Dorsolateral prefrontal cortex (tissue), 120 donors: ENCODE measurements at regions of chr7 and their contacts with region 1.

Region 1: DNA sequence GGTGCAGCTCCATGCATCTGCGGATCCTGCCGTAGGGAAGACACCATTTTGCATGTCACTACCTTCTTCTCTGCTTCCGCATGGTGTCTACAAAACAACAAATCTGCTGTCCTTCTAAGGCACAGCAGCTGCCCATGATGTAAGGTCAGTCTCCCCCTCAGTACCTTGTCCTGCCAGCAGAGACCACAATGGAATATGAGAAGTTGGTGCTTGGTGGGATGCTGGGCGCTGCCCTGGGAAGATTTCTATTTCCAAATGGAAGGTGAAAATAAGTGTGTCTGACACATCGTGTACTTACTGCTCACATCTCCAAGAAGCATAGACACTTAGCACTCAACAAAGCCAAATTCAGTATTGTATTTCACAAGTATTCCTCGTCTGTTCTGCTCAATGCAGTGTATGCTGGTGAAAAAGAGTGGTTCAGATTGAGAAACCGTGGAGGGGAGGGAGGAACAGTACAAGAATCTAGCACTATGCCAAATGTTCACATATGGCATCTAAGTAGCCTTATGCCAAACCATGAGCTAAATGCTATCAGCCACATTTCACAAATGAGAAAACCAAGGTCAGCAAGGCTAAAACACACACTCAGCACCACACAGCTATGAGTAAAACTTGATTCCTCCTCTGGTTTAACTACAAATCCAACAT is 95.0 kb downstream of the GRB10 start:
- DNase-seq: peak in 1 of 10 donors; percentile 40
- H3K4me3 ChIP-seq: no peak overlapping the region
- H3K27ac ChIP-seq: peak overlapping the region in 3 of 59 donors; percentile 12 to 57 (median 53)
- H3K27me3 ChIP-seq: no peaks in the 10 kb centered on the region
- CTCF ChIP-seq: no peak

Region 2: DNA sequence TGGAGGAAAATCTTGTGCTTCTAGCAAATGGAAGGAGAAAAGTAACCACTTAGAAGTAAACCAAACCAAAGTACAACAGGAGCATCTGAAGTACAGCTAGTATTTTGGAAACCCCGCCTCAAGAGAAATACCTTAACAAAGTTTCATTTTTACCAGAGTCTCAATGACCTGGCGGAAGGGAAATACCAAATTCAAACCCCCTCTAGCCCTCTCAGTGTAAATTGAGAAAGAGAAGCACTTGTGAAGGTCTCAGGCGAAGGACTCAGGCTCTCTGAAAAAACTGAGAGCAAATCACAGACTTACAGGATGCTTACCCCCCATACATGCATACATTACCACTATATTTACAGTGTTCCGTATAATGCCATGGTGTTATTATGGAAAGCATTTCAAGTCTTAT is 664.7 kb before region 1 on chr7:
- intact Hi-C with region 1: no loop called
- DNase-seq: no peak
- H3K4me3 ChIP-seq: no peak overlapping the region
- H3K27ac ChIP-seq: no peak overlapping the region
- H3K27me3 ChIP-seq: no peaks in the 10 kb centered on the region
- CTCF ChIP-seq: no peak

Region 3: DNA sequence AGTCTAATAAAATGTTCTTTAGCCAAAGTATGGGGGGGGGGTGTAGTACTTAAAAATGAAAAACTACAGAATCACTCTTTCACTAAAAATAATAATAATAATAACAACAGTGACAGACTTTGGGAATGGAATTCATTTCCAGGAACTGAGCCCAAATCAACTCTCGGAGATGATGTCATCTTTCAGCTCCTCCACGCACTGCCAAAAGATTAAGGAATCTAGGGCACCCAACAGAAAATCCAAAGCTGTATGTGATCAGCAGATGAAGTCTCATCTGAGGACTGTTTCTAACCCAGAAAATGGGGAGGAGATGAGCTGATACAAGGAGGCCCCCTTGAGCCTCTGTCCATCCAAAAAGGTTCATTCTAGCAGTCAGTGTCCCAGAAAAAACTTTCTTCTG is 40.5 kb after region 1 on chr7:
- intact Hi-C with region 1: no loop called
- DNase-seq: no peak
- H3K4me3 ChIP-seq: no peak overlapping the region
- H3K27ac ChIP-seq: no peak overlapping the region
- H3K27me3 ChIP-seq: no peaks in the 10 kb centered on the region
- CTCF ChIP-seq: no peak

Region 4: DNA sequence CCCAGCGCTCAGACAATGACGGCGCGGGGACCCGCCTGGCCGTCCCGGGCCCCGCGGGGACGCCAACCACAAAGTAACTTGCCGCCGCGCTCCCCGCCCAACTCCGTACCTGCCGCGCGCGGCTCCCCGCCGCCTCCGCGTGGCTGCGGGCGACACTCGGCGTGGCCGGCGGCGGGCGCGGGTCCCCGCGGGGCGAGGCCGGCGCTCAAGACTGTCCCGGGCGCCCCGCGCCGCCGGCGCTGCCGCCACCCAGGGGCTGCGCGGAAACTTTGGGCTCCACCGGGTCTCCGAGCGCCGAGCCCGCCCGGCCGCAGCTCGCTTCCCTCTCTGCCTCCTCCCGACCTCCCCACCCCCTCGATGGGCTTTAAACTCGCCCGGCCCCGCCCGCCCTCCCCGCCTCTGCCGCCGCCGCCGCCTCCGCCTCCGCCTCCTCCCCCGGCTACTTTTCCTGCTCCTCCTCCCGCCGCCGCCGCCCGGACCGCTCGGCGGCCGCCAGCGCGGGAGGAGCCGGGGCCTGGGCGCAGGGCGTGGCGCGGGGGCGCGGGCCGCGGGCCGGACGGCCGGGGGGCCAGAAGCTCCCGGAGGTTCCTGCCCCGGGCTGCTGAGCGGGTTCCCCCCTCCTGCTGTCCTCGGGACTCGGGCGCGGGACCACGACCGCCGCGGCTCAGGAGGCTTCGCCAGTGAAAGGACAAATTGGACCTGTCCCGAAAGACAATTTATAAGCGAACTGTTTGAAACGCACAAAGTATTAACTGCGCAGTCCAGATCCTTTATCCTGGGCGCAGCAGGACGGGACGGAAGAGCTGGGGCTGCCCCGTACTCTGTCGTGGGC is 105.6 kb after region 1 on chr7:
- intact Hi-C with region 1: loop called in 1 of 2 experiments (anchors 5 kb)
- DNase-seq: peak in 2 of 10 donors; percentile 28 to 46
- H3K4me3 ChIP-seq: peak overlapping the region in 58 of 59 donors; percentile 7 to 73 (median 52)
- H3K27ac ChIP-seq: peak overlapping the region in 21 of 59 donors; percentile 13 to 72 (median 42)
- H3K27me3 ChIP-seq: peaks cover 0 to 48% (median 20%) of the 10 kb centered on the region in 45 donors
- CTCF ChIP-seq: no peak

Region 5: DNA sequence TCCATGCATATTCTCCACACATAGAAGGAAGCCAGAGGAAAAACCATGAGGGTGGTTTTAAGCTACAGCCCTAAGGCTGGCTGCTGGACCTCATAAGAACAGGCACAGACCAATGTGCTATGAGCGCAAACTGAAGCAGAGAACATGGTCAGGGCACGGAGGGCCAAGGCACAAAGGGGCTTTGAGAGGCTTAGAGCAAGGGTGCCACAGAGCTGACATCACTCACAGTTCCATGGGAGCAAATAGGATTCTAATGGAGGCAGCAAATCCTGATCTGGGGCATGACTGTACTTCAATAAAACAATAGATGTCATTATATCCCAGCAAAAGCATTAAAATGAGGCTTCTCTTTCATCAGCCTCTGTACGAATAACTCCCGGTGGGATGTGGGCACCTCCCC is 466.5 kb after region 1 on chr7:
- intact Hi-C with region 1: loop called in 1 of 2 experiments (anchors 5 kb)
- DNase-seq: peak in 8 of 10 donors; percentile 56 to 87 (median 81)
- H3K4me3 ChIP-seq: peak overlapping the region in 8 of 59 donors; percentile 0 to 21 (median 10)
- H3K27ac ChIP-seq: peak overlapping the region; percentile 0 to 97 (median 90)
- H3K27me3 ChIP-seq: no peaks in the 10 kb centered on the region
- CTCF ChIP-seq: peak in 9 of 56 donors; percentile 7 to 31 (median 16)

Region 6: DNA sequence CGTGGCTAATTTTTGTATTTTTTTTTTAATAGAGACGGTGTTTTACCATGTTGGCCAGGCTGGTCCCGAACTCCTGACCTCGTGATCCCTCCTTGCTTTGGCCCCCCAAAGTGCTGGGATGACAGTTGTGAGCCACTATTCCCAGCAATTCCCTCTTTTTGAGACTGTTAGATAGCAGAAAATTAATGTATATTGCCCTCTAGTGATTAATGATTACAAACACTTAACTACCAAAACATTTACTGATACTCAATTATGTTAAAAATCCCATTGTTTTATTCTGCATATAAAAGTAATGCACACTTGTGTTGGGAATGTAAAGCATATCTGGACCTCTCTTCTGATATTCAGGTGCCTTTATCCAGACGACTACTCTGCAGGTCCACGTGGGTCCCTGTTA is 670.1 kb after region 1 on chr7:
- intact Hi-C with region 1: loop called in 1 of 2 experiments (anchors 5 kb)
- DNase-seq: no peak
- H3K4me3 ChIP-seq: no peak overlapping the region
- H3K27ac ChIP-seq: peak overlapping the region in 1 of 59 donors; percentile 1
- H3K27me3 ChIP-seq: no peaks in the 10 kb centered on the region
- CTCF ChIP-seq: peak in 51 of 56 donors; percentile 28 to 79 (median 52)